ENCODE measurements at regions of chr11 and their contacts with region 1.

Region 1: DNA sequence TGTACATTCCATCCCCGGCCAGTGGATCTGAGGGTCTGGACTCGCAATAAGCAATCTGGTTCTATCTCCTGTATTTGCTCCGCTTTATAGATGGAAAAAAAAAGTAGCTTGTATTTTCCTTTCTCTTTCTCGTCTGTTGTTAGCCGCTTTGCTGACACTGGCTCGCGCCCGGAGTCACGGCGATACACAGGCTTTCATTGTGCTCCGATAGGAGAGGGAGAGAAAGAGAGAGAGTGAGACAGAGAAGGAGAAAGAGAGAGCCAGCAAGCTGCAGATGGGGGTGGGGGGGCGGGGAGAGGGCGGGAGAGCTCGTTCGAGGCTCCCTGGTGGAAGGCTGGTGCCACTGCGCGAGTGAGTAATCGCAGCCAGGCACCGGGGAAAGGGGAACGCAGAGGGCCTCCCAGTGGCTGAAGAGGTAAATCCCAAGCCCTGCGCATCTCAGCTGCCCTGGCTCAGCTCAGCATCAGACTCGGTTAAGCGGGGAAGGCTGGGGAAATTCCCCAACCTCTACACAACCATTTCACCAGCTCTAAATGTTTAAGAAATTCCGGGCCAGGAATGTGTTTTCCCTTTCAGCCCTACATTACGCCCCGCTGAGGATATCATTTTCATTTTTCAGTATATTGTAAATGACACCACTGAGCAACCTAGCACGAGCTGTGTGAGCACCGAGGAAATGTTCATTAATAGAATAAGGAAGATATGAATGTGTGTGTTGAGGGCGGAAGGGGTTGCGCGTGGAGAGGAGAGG is at the start of gene MAML2:
- DNase-seq: peak; percentile 94
- ATAC-seq: peak; percentile 88
- H3K4me3 ChIP-seq: peak within 1 kb of the TSS; percentile 92
- H3K27ac ChIP-seq: peak within 1 kb of the TSS; percentile 94
- H3K4me1 ChIP-seq: peaks cover 9% of the 10 kb centered on the region
- H3K27me3 ChIP-seq: no peaks in the 10 kb centered on the region
- CTCF ChIP-seq: peak; percentile 99
- POLR2A ChIP-seq: peak; percentile 73
- RAD21 ChIP-seq: peak; percentile 95
- total RNA-seq, gene MAML2: 18.1 and 19.5 TPM in 2 replicates

Region 2: GRCh38 chr11:95849087-95849825 is 493.9 kb before region 1 on chr11:
- CTCF ChIA-PET with region 1: interaction called, 10 read pairs
- POLR2A ChIA-PET with region 1: no interaction called
- dilution Hi-C with region 1: no loop called
- in situ Hi-C with region 1: no loop called
- intact Hi-C with region 1: no loop called
- DNase-seq: peak; percentile 82
- ATAC-seq: peak; percentile 74
- H3K4me3 ChIP-seq: no peak overlapping the region
- H3K27ac ChIP-seq: no peak overlapping the region
- H3K4me1 ChIP-seq: peaks cover 5% of the 10 kb centered on the region
- H3K27me3 ChIP-seq: no peaks in the 10 kb centered on the region
- CTCF ChIP-seq: peak; percentile 57
- POLR2A ChIP-seq: no peak
- RAD21 ChIP-seq: peak; percentile 75

Region 3: DNA sequence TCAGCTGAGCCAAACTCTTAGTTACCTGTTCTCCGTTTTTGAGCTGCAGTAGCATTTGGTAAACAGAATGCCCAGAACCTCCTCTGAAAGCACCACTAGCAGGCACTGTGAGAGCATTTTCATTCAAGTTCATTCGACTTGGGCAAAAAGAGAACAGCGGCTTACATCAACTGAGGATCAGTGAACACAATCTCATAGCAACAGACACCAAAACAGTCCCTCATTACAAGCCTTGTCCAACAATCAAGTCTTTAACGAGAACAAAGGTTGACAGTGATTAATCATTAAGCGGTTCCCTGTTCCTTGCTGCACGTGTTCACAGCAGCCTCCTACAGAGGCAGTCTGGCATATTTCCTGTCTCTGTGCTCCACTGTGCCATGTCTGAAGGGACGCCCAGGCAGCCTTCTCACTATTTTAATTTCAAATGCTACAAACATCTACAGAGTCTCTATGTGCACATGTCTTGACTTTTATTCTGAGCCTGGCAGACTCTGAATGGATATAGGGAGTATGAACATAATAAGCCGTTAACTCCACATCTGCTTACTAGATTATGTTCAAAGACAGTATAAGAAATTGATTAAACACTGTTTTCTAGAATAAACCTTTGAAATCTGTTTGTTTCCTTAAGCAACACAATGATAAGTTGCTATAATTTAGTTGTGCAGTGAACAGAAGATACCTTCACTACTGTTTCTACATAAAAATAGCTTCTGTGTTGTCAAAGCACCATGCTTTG is 330.9 kb before region 1 on chr11:
- CTCF ChIA-PET with region 1: interaction called, 5 read pairs
- POLR2A ChIA-PET with region 1: no interaction called
- dilution Hi-C with region 1: no loop called
- in situ Hi-C with region 1: no loop called
- intact Hi-C with region 1: loop called (anchors 5 kb)
- DNase-seq: peak; percentile 54
- ATAC-seq: peak; percentile 31
- H3K4me3 ChIP-seq: no peak overlapping the region
- H3K27ac ChIP-seq: no peak overlapping the region
- H3K4me1 ChIP-seq: peaks cover 15% of the 10 kb centered on the region
- H3K27me3 ChIP-seq: no peaks in the 10 kb centered on the region
- CTCF ChIP-seq: peak; percentile 42
- POLR2A ChIP-seq: no peak
- RAD21 ChIP-seq: peak; percentile 53; the same call in 1 of the 2 replicates

Region 4: DNA sequence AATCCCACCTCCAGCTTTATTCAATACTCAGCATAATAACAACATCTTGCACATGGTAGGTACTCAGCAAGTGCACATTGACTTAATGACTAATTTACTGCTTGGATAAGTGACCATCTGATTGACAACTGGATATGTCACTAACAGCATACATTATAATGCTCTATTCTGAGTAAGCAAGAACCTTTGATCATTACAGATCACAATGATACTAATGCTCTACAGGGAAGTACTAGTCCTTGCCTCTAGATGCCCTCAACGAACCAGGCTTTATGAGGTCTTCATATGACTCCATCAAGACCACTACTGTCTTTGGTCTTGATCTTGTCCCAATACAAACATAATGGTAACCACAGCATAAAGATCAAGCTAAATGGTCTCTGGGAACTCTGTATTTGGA is 251.7 kb before region 1 on chr11:
- CTCF ChIA-PET with region 1: interaction called, 4 read pairs
- POLR2A ChIA-PET with region 1: no interaction called
- dilution Hi-C with region 1: no loop called
- in situ Hi-C with region 1: no loop called
- intact Hi-C with region 1: loop called (anchors 2 kb)
- DNase-seq: peak; percentile 27
- ATAC-seq: no peak
- H3K4me3 ChIP-seq: no peak overlapping the region
- H3K27ac ChIP-seq: no peak overlapping the region
- H3K4me1 ChIP-seq: peaks cover 12% of the 10 kb centered on the region
- H3K27me3 ChIP-seq: no peaks in the 10 kb centered on the region
- CTCF ChIP-seq: 0 out of 2 replicates have a peak, but pooled peaks have one; percentile 23
- POLR2A ChIP-seq: no peak
- RAD21 ChIP-seq: peak; percentile 39

Region 5: GRCh38 chr11:96199563-96200025 is 143.5 kb before region 1 on chr11:
- CTCF ChIA-PET with region 1: interaction called, 10 read pairs
- POLR2A ChIA-PET with region 1: interaction called, 4 read pairs
- dilution Hi-C with region 1: no loop called
- in situ Hi-C with region 1: no loop called
- intact Hi-C with region 1: no loop called
- DNase-seq: peak; percentile 80
- ATAC-seq: no peak; the same call in 1 of the 2 replicates
- H3K4me3 ChIP-seq: no peak overlapping the region
- H3K27ac ChIP-seq: peak overlapping the region; percentile 69; the same call in 1 of the 2 replicates
- H3K4me1 ChIP-seq: peaks cover 19% of the 10 kb centered on the region
- H3K27me3 ChIP-seq: no peaks in the 10 kb centered on the region
- CTCF ChIP-seq: no peak
- POLR2A ChIP-seq: no peak
- RAD21 ChIP-seq: no peak

Region 6: GRCh38 chr11:96242971-96243647 is 100.0 kb before region 1 on chr11:
- CTCF ChIA-PET with region 1: interaction called, 34 read pairs
- POLR2A ChIA-PET with region 1: interaction called, 3 read pairs
- dilution Hi-C with region 1: no loop called
- in situ Hi-C with region 1: no loop called
- intact Hi-C with region 1: loop called (anchors 1 kb)
- DNase-seq: peak; percentile 98
- ATAC-seq: peak; percentile 98
- H3K4me3 ChIP-seq: peak overlapping the region; percentile 44
- H3K27ac ChIP-seq: peak overlapping the region; percentile 80
- H3K4me1 ChIP-seq: peaks cover 22% of the 10 kb centered on the region
- H3K27me3 ChIP-seq: no peaks in the 10 kb centered on the region
- CTCF ChIP-seq: no peak
- POLR2A ChIP-seq: no peak
- RAD21 ChIP-seq: no peak

Measured in IMR-90 (cell line).